Mammary epithelial cell (primary cell): ENCODE measurements at regions of chr11 and their contacts with region 1.

Region 1: GRCh38 chr11:9506489-9507276 is 45.9 kb downstream of the ZNF143 start:
- DNase-seq: peak; percentile 60
- H3K4me3 ChIP-seq: no peak overlapping the region
- H3K27ac ChIP-seq: no peak overlapping the region
- H3K4me1 ChIP-seq: no peaks in the 10 kb centered on the region
- H3K27me3 ChIP-seq: no peaks in the 10 kb centered on the region
- CTCF ChIP-seq: peak; percentile 88 to 91

Region 2: GRCh38 chr11:9015677-9016076 is 491.0 kb before region 1 on chr11:
- CTCF ChIA-PET with region 1: interaction called, 3 read pairs
- dilution Hi-C with region 1: no loop called
- in situ Hi-C with region 1: loop called in 1 of 2 experiments (anchors 25 kb)
- intact Hi-C with region 1: loop called (anchors 1 kb)
- DNase-seq: peak; percentile 60
- H3K4me3 ChIP-seq: no peak overlapping the region
- H3K27ac ChIP-seq: no peak overlapping the region
- H3K4me1 ChIP-seq: no peaks in the 10 kb centered on the region
- H3K27me3 ChIP-seq: no peaks in the 10 kb centered on the region
- CTCF ChIP-seq: peak; percentile 85 to 96

Region 3: DNA sequence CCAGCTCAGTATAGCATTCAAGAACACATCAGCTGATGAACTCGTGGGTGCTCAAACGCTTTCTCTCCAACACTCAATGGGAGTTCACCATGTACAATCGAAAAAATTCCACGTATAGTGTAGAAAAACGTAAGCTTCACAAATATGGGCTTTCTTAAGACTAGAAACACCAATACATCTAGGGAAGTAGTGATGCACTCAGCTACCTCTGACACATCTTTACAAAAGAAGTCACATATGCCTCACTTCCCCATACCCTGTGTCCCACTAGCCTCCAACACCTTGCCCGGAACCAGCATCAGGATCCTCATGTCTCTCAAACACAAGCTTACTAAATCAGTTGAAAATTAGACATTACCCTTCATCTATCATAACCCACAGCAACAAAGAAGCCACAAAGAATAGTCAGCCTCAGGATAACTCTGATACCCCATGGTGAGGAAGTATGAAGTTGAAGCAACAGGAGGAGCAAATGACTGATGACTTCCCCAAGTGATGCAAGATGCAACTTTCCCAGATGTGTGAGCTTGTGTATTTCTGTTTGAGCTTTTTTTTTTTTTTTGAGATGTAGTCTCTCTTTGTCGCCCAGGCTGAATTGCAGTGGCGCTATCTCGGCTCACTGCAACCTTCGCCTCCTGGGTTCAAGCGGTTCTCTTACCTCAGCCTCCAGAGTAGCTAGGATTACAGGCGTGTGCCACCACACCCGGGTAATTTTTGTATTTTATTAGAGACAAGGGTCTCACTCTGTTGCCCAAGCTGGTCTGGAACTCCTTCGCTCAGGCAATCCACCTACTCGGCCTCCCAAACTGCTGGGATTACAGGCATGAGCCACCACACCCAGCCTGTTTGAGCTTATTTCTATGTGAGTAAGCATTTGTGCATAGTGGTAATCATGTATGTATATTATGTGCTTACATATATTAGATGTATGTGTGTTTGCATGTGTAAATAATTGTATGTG is 233.0 kb before region 1 on chr11:
- CTCF ChIA-PET with region 1: interaction called, 4 read pairs
- dilution Hi-C with region 1: no loop called
- in situ Hi-C with region 1: no loop called
- intact Hi-C with region 1: loop called (anchors 1 kb)
- DNase-seq: peak; percentile 70
- H3K4me3 ChIP-seq: no peak overlapping the region
- H3K27ac ChIP-seq: no peak overlapping the region
- H3K4me1 ChIP-seq: no peaks in the 10 kb centered on the region
- H3K27me3 ChIP-seq: no peaks in the 10 kb centered on the region
- CTCF ChIP-seq: no peak

Region 4: GRCh38 chr11:9460322-9461067 is 46.2 kb before region 1 on chr11 and contains the start of gene ZNF143:
- CTCF ChIA-PET with region 1: interaction called, 3 read pairs
- dilution Hi-C with region 1: loop called (anchors 5 kb)
- in situ Hi-C with region 1: no loop called
- intact Hi-C with region 1: loop called (anchors 5 kb)
- DNase-seq: peak; percentile 100
- H3K4me3 ChIP-seq: peak within 1 kb of the TSS; percentile 65 to 88 (median 82)
- H3K27ac ChIP-seq: peak within 1 kb of the TSS; percentile 98
- H3K4me1 ChIP-seq: peaks cover 19% of the 10 kb centered on the region
- H3K27me3 ChIP-seq: no peaks in the 10 kb centered on the region
- CTCF ChIP-seq: no peak
- total RNA-seq, gene ZNF143: 19.5 to 22.7 TPM